K562 (cell line): ENCODE measurements at regions of chr6 and their contacts with region 1.

Region 1: GRCh38 chr6:118551063-118552053 is 3.3 kb downstream of the PLN start:
- DNase-seq: peak; percentile 34 to 59 (median 42)
- ATAC-seq: peak; percentile 94
- H3K4me3 ChIP-seq: no peak overlapping the region
- H3K27ac ChIP-seq: no peak overlapping the region
- H3K4me1 ChIP-seq: no peaks in the 10 kb centered on the region; a peak in 1 of 5 replicates
- H3K27me3 ChIP-seq: no peaks in the 10 kb centered on the region
- CTCF ChIP-seq: peak; percentile 55 to 75 (median 63); a peak in 5 of 6 replicates
- EP300 ChIP-seq: no peak
- POLR2A ChIP-seq: no peak
- RAD21 ChIP-seq: peak; percentile 82 to 83

Region 2: GRCh38 chr6:117976030-117976651 is 575.2 kb before region 1 on chr6:
- CTCF ChIA-PET with region 1: interaction called, 3 read pairs
- POLR2A ChIA-PET with region 1: no interaction called
- in situ Hi-C with region 1: no loop called
- intact Hi-C with region 1: loop called (anchors 5 kb)
- DNase-seq: peak; percentile 20 to 59 (median 23)
- ATAC-seq: peak; percentile 76
- H3K4me3 ChIP-seq: no peak overlapping the region
- H3K27ac ChIP-seq: no peak overlapping the region
- H3K4me1 ChIP-seq: no peaks in the 10 kb centered on the region
- H3K27me3 ChIP-seq: no peaks in the 10 kb centered on the region
- CTCF ChIP-seq: peak; percentile 41 to 61 (median 58); a peak in 5 of 6 replicates
- EP300 ChIP-seq: no peak
- POLR2A ChIP-seq: no peak
- RAD21 ChIP-seq: peak; percentile 28 to 63

Region 3: DNA sequence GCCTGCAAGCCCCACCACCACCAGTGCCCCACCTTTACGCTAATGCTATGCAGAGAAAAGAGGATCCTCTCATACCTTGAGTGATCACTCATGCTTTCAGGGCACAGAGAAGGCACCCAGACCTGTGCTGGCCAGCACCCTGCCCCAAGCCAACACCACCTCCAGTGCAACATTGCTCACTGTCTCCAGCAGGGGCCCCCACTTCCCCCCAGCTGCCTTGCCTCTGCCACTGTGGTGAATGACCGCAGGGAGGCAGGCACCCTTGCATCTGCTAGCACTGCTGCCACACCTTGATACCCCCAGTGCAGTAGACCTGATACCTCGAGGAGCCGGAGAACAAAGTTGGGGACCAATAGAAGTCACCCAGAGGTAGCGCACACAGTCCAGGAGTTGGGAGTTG is 142.5 kb before region 1 on chr6:
- CTCF ChIA-PET with region 1: no interaction called
- POLR2A ChIA-PET with region 1: no interaction called
- in situ Hi-C with region 1: no loop called
- intact Hi-C with region 1: loop called (anchors 1 kb)
- DNase-seq: peak; percentile 22 to 50 (median 37)
- ATAC-seq: peak; percentile 98
- H3K4me3 ChIP-seq: no peak overlapping the region
- H3K27ac ChIP-seq: no peak overlapping the region
- H3K4me1 ChIP-seq: no peaks in the 10 kb centered on the region
- H3K27me3 ChIP-seq: no peaks in the 10 kb centered on the region; a peak in 1 of 5 replicates
- CTCF ChIP-seq: peak; percentile 57 to 98 (median 76)
- EP300 ChIP-seq: no peak
- POLR2A ChIP-seq: no peak
- RAD21 ChIP-seq: peak in 1 of 2 experiments; percentile 58; a peak in 2 of 4 replicates

Region 4: GRCh38 chr6:118509009-118509617 is 42.2 kb before region 1 on chr6:
- CTCF ChIA-PET with region 1: interaction called, 3 read pairs
- POLR2A ChIA-PET with region 1: no interaction called
- in situ Hi-C with region 1: no loop called
- intact Hi-C with region 1: loop called (anchors 1 kb)
- DNase-seq: peak in 3 of 4 experiments; percentile 11 to 41 (median 16)
- ATAC-seq: no peak
- H3K4me3 ChIP-seq: no peak overlapping the region
- H3K27ac ChIP-seq: no peak overlapping the region
- H3K4me1 ChIP-seq: peaks cover 3 to 10% of the 10 kb centered on the region in 2 experiments; a peak in 2 of 5 replicates
- H3K27me3 ChIP-seq: no peaks in the 10 kb centered on the region
- CTCF ChIP-seq: peak; percentile 47 to 66 (median 60); a peak in 5 of 6 replicates
- EP300 ChIP-seq: no peak
- POLR2A ChIP-seq: no peak
- RAD21 ChIP-seq: peak; percentile 54 to 63

Region 5: GRCh38 chr6:118580585-118581419 is 29.4 kb after region 1 on chr6:
- CTCF ChIA-PET with region 1: interaction called, 3 read pairs
- POLR2A ChIA-PET with region 1: no interaction called
- in situ Hi-C with region 1: no loop called
- intact Hi-C with region 1: loop called (anchors 2 kb)
- DNase-seq: peak; percentile 37 to 72 (median 40)
- ATAC-seq: peak; percentile 93
- H3K4me3 ChIP-seq: no peak overlapping the region
- H3K27ac ChIP-seq: no peak overlapping the region
- H3K4me1 ChIP-seq: peaks cover 0 to 14% of the 10 kb centered on the region in 2 experiments; a peak in 3 of 5 replicates
- H3K27me3 ChIP-seq: no peaks in the 10 kb centered on the region
- CTCF ChIP-seq: peak; percentile 60 to 65 (median 61)
- EP300 ChIP-seq: no peak
- POLR2A ChIP-seq: no peak
- RAD21 ChIP-seq: peak; percentile 65 to 74

Region 6: DNA sequence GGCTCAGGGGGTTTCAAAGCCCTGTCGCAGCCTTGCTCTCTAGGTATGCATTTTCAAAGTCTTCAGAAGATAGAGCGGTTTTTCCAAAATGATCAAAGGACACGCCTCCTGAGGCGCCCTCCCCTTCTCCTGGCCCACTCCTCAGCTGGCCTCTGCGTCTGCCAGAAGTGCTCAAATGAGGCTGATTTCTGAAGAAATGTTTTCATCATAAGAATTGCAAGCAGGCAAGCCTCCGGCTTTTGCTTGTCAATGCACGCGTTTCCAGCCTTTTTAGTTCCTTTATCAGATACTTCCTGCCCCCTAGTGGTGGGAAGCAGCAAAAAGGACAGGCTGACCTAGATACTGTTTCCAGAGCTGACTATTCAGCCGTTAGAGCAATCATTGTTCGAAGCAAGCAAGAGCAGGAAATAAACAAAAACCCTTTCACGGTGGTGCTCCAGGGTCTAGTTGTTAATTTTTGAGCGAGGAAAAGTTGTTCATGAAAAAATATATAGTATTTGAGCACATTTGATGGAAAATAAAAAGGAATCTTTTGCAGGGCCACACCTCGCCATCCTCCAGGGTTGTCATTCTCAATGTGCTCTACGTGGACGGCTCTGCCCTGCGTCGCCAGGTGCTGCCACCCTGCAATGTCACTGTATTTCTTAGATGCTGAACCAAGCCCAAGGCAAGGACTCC is 249.2 kb after region 1 on chr6:
- CTCF ChIA-PET with region 1: no interaction called
- POLR2A ChIA-PET with region 1: no interaction called
- in situ Hi-C with region 1: no loop called
- intact Hi-C with region 1: loop called (anchors 2 kb)
- DNase-seq: peak; percentile 77 to 89 (median 80)
- ATAC-seq: peak; percentile 96
- H3K4me3 ChIP-seq: no peak overlapping the region
- H3K27ac ChIP-seq: no peak overlapping the region
- H3K4me1 ChIP-seq: peaks cover 0 to 3% of the 10 kb centered on the region in 2 experiments; a peak in 3 of 5 replicates
- H3K27me3 ChIP-seq: no peaks in the 10 kb centered on the region
- CTCF ChIP-seq: peak; percentile 74 to 92 (median 83)
- EP300 ChIP-seq: no peak
- POLR2A ChIP-seq: no peak
- RAD21 ChIP-seq: peak; percentile 74 to 88

Region 7: GRCh38 chr6:119110601-119111548 is 559.5 kb after region 1 on chr6:
- CTCF ChIA-PET with region 1: no interaction called
- POLR2A ChIA-PET with region 1: no interaction called
- in situ Hi-C with region 1: no loop called
- intact Hi-C with region 1: loop called (anchors 5 kb)
- DNase-seq: peak; percentile 58 to 79 (median 64)
- ATAC-seq: peak; percentile 92
- H3K4me3 ChIP-seq: no peak overlapping the region
- H3K27ac ChIP-seq: no peak overlapping the region
- H3K4me1 ChIP-seq: peaks cover 3 to 16% of the 10 kb centered on the region in 2 experiments; a peak in 3 of 5 replicates
- H3K27me3 ChIP-seq: no peaks in the 10 kb centered on the region
- CTCF ChIP-seq: peak; percentile 68 to 86 (median 72)
- EP300 ChIP-seq: no peak
- POLR2A ChIP-seq: no peak
- RAD21 ChIP-seq: peak; percentile 97 to 98